CD8-positive, alpha-beta T cell (primary cell): ENCODE measurements at regions of chr17 and their contacts with region 1.

Region 1: GRCh38 chr17:32370426-32370825 is 20.5 kb downstream of the ZNF207 start:
- DNase-seq: no peak
- ATAC-seq: no peak
- H3K4me3 ChIP-seq: no peak overlapping the region
- H3K4me3 Mint-ChIP-seq: no peak overlapping the region
- H3K27ac ChIP-seq: no peak overlapping the region
- H3K27ac Mint-ChIP-seq: no peak overlapping the region
- H3K4me1 ChIP-seq: peaks cover 5% of the 10 kb centered on the region
- H3K4me1 Mint-ChIP-seq: peaks cover 28% of the 10 kb centered on the region
- H3K27me3 ChIP-seq: no peaks in the 10 kb centered on the region
- H3K27me3 Mint-ChIP-seq: no peaks in the 10 kb centered on the region
- CTCF ChIP-seq: no peak

Region 2: DNA sequence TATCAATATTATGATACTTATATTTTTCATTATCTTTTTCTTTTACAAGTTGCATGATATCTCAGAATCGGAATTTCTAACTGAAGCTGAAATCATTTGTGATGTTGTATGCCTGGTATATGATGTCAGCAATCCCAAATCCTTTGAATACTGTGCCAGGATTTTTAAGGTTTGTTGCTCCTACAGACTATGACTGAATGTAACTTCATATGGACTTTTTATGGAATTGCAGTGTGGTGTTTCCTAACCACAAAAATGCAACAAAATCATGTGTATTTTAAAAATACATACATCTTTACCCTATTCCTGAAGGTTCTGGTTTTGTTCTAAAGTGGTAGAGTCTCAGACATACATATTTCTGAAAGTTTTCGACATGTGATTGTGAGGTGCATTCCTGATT is 163.6 kb before region 1 on chr17:
- CTCF ChIA-PET with region 1: no interaction called
- POLR2A ChIA-PET with region 1: no interaction called
- intact Hi-C with region 1: no loop called
- DNase-seq: no peak
- ATAC-seq: no peak
- H3K4me3 ChIP-seq: no peak overlapping the region
- H3K4me3 Mint-ChIP-seq: no peak overlapping the region
- H3K27ac ChIP-seq: no peak overlapping the region
- H3K27ac Mint-ChIP-seq: no peak overlapping the region
- H3K4me1 ChIP-seq: no peaks in the 10 kb centered on the region
- H3K4me1 Mint-ChIP-seq: no peaks in the 10 kb centered on the region
- H3K27me3 ChIP-seq: no peaks in the 10 kb centered on the region
- H3K27me3 Mint-ChIP-seq: no peaks in the 10 kb centered on the region
- CTCF ChIP-seq: no peak

Region 3: GRCh38 chr17:32357615-32358014 is 12.8 kb before region 1 on chr17:
- CTCF ChIA-PET with region 1: interaction called, 3 read pairs
- POLR2A ChIA-PET with region 1: interaction called, 13 read pairs
- intact Hi-C with region 1: no loop called
- DNase-seq: no peak
- ATAC-seq: no peak
- H3K4me3 ChIP-seq: no peak overlapping the region
- H3K4me3 Mint-ChIP-seq: no peak overlapping the region
- H3K27ac ChIP-seq: no peak overlapping the region
- H3K27ac Mint-ChIP-seq: no peak overlapping the region
- H3K4me1 ChIP-seq: peaks cover 56% of the 10 kb centered on the region
- H3K4me1 Mint-ChIP-seq: peaks cover 65% of the 10 kb centered on the region
- H3K27me3 ChIP-seq: no peaks in the 10 kb centered on the region
- H3K27me3 Mint-ChIP-seq: no peaks in the 10 kb centered on the region
- CTCF ChIP-seq: no peak

Region 4: GRCh38 chr17:32382526-32383223 is 12.2 kb after region 1 on chr17:
- CTCF ChIA-PET with region 1: no interaction called
- POLR2A ChIA-PET with region 1: no interaction called
- intact Hi-C with region 1: loop called in 1 of 2 experiments (anchors 2 kb)
- DNase-seq: no peak
- ATAC-seq: no peak
- H3K4me3 ChIP-seq: no peak overlapping the region
- H3K4me3 Mint-ChIP-seq: no peak overlapping the region
- H3K27ac ChIP-seq: no peak overlapping the region
- H3K27ac Mint-ChIP-seq: peak overlapping the region; percentile 15
- H3K4me1 ChIP-seq: no peaks in the 10 kb centered on the region
- H3K4me1 Mint-ChIP-seq: peaks cover 5% of the 10 kb centered on the region
- H3K27me3 ChIP-seq: no peaks in the 10 kb centered on the region
- H3K27me3 Mint-ChIP-seq: no peaks in the 10 kb centered on the region
- CTCF ChIP-seq: no peak